ENCODE measurements at regions of chr7 and their contacts with region 1.

Region 1: DNA sequence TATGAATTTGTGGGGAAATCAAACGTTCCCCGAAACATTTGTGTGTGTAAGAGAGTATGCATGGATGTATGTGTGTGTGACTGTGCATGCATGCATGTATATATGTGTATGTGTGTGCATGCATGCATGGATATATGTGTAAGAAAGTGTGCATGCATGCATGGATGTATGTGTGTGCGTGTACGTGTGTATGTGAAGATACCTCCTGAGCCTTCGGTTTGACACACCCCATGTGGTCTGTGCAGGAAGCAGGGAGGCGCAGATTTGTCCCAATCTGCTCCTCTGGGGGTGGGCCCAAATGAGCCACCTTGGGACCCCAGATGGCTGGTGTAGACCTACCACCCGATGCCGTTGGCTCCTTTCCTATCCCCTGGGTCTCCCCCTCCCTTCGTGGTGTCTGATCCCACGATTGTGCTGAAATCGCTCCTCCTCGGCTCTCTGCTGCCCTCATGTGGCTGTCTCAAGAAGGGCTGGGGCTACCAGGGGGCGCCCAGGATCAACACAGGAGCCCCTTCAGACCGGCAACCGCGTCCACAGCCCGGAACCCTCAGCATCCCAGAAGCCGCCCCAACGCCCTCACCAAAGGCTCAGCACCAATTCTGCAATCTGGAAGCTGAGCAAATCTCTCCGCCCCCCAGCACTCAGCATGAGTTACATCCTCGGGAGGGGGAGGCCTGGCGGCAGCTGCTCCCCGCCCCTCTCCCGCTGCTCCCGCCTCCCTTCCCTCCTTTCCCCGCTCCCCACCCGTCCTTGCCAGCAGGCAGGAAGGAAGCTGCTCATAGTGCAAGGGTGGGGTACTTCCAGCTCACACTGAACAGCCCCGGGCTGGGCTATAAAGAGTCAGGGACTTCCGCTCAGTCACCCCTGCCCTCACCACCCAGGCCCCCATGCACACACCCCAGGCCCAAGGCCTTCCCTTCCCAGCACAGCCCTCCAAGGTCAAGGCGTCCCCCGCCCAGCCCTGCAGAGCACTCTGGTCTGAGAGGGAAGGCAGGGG is 2.3 kb upstream of the NOS3 start:
- DNase-seq: peak; percentile 49 to 72 (median 64)
- ATAC-seq: peak; percentile 79
- H3K4me3 ChIP-seq: peak overlapping the region; percentile 10
- H3K4me3 Mint-ChIP-seq: peak overlapping the region; percentile 37 to 83 (median 72)
- H3K27ac ChIP-seq: no peak overlapping the region
- H3K27ac Mint-ChIP-seq: peak overlapping the region in 6 of 9 donors; percentile 5 to 65 (median 26)
- H3K4me1 ChIP-seq: peaks cover 12 to 21% of the 10 kb centered on the region in 2 donors
- H3K4me1 Mint-ChIP-seq: peaks cover 19 to 43% (median 31%) of the 10 kb centered on the region in 7 donors
- H3K27me3 ChIP-seq: no peaks in the 10 kb centered on the region
- H3K27me3 Mint-ChIP-seq: peaks cover 0 to 34% (median 0%) of the 10 kb centered on the region in 5 donors

Region 2: GRCh38 chr7:150898475-150899011 is 90.0 kb before region 1 on chr7:
- CTCF ChIA-PET with region 1: interaction called, 13 read pairs
- POLR2A ChIA-PET with region 1: no interaction called
- intact Hi-C with region 1: loop called (anchors 1 kb)
- DNase-seq: peak; percentile 44 to 81 (median 70)
- ATAC-seq: peak; percentile 84
- H3K4me3 ChIP-seq: no peak overlapping the region
- H3K4me3 Mint-ChIP-seq: peak overlapping the region in 1 of 10 donors; percentile 19
- H3K27ac ChIP-seq: no peak overlapping the region
- H3K27ac Mint-ChIP-seq: peak overlapping the region in 1 of 9 donors; percentile 34
- H3K4me1 ChIP-seq: no peaks in the 10 kb centered on the region
- H3K4me1 Mint-ChIP-seq: peaks cover 0 to 11% (median 5%) of the 10 kb centered on the region in 7 donors
- H3K27me3 ChIP-seq: no peaks in the 10 kb centered on the region
- H3K27me3 Mint-ChIP-seq: peaks cover 32 to 66% (median 60%) of the 10 kb centered on the region in 5 donors

Region 3: GRCh38 chr7:150927956-150928344 is 60.6 kb before region 1 on chr7:
- CTCF ChIA-PET with region 1: no interaction called
- POLR2A ChIA-PET with region 1: no interaction called
- intact Hi-C with region 1: no loop called
- DNase-seq: no peak
- ATAC-seq: no peak
- H3K4me3 ChIP-seq: no peak overlapping the region
- H3K4me3 Mint-ChIP-seq: no peak overlapping the region
- H3K27ac ChIP-seq: no peak overlapping the region
- H3K27ac Mint-ChIP-seq: no peak overlapping the region
- H3K4me1 ChIP-seq: peaks cover 0 to 5% of the 10 kb centered on the region in 2 donors
- H3K4me1 Mint-ChIP-seq: peaks cover 8 to 30% (median 23%) of the 10 kb centered on the region in 7 donors
- H3K27me3 ChIP-seq: no peaks in the 10 kb centered on the region
- H3K27me3 Mint-ChIP-seq: peaks cover 0 to 49% (median 4%) of the 10 kb centered on the region in 5 donors

Region 4: DNA sequence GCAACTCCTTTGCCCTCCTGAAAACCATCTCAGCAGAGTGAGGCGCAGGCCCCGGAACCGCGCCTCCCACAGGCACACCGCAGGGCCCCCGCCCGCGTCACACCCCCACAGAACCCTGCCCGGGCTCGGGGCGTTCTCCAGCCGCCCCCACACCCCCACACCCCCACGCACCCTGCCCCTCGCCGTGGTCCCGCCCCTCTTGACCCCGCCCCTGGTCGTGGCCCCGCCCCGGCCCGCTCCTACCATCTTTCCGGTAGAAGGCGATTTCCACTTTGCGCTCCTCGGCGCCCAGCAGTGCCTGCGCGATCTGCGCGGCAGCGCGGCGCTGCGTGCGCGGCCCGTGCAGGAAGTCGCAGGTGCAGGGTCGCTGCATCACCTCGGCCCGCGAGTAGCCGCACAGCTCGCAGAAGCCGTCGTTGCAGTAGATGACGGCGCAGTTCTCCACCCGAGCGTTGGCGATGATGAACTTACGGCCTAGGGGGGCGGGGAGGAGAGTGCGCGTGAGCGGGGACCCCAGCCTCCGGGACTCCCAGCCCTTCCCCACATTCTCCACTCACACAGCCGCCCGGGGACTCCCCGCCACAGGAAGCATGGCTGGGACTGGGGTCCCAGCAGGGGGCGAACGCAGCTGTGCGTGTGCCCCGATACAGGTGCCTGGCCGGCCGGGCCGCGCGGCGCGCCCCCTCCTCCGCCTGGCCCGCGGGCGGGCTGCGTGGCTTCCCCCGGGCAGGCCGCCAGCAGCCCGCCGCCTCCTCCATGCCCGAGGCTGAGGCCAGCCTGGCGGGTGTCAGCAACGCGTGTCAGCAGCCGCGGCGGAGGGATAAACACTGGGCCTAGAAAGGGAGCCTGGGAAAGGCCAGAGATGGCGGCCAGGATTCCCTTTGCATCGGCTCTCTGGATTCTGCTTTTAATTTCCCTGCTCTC is 13.8 kb before region 1 on chr7:
- CTCF ChIA-PET with region 1: interaction called, 18 read pairs
- POLR2A ChIA-PET with region 1: interaction called, 19 read pairs
- intact Hi-C with region 1: loop called in 1 of 2 experiments (anchors 1 kb)
- DNase-seq: peak; percentile 63 to 84 (median 80)
- ATAC-seq: peak; percentile 85
- H3K4me3 ChIP-seq: peak overlapping the region; percentile 63
- H3K4me3 Mint-ChIP-seq: peak overlapping the region; percentile 85 to 92 (median 88)
- H3K27ac ChIP-seq: peak overlapping the region; percentile 73
- H3K27ac Mint-ChIP-seq: peak overlapping the region; percentile 59 to 97 (median 95)
- H3K4me1 ChIP-seq: peaks cover 20 to 47% of the 10 kb centered on the region in 2 donors
- H3K4me1 Mint-ChIP-seq: peaks cover 33 to 62% (median 55%) of the 10 kb centered on the region in 7 donors
- H3K27me3 ChIP-seq: peaks cover 7 to 13% of the 10 kb centered on the region in 2 donors
- H3K27me3 Mint-ChIP-seq: peaks cover 9 to 36% (median 25%) of the 10 kb centered on the region in 5 donors

Region 5: GRCh38 chr7:151051108-151051507 is 62.6 kb after region 1 on chr7:
- CTCF ChIA-PET with region 1: no interaction called
- POLR2A ChIA-PET with region 1: no interaction called
- intact Hi-C with region 1: loop called (anchors 1 to 5 kb)
- DNase-seq: peak; percentile 55 to 75 (median 69)
- ATAC-seq: peak; percentile 88
- H3K4me3 ChIP-seq: no peak overlapping the region
- H3K4me3 Mint-ChIP-seq: no peak overlapping the region
- H3K27ac ChIP-seq: no peak overlapping the region
- H3K27ac Mint-ChIP-seq: no peak overlapping the region
- H3K4me1 ChIP-seq: peaks cover 0 to 6% of the 10 kb centered on the region in 2 donors
- H3K4me1 Mint-ChIP-seq: peaks cover 6 to 19% (median 14%) of the 10 kb centered on the region in 7 donors
- H3K27me3 ChIP-seq: no peaks in the 10 kb centered on the region
- H3K27me3 Mint-ChIP-seq: peaks cover 0 to 10% (median 0%) of the 10 kb centered on the region in 5 donors

Region 6: GRCh38 chr7:151110941-151111645 is 122.6 kb after region 1 on chr7:
- CTCF ChIA-PET with region 1: interaction called, 5 read pairs
- POLR2A ChIA-PET with region 1: no interaction called
- intact Hi-C with region 1: loop called (anchors 1 kb)
- DNase-seq: peak; percentile 41 to 79 (median 71)
- ATAC-seq: peak; percentile 82
- H3K4me3 ChIP-seq: no peak overlapping the region
- H3K4me3 Mint-ChIP-seq: peak overlapping the region in 1 of 10 donors; percentile 29
- H3K27ac ChIP-seq: no peak overlapping the region
- H3K27ac Mint-ChIP-seq: no peak overlapping the region
- H3K4me1 ChIP-seq: no peaks in the 10 kb centered on the region
- H3K4me1 Mint-ChIP-seq: peaks cover 0 to 9% (median 4%) of the 10 kb centered on the region in 7 donors
- H3K27me3 ChIP-seq: peaks cover 0 to 4% of the 10 kb centered on the region in 2 donors
- H3K27me3 Mint-ChIP-seq: peaks cover 0 to 20% (median 0%) of the 10 kb centered on the region in 5 donors

Measured in naive thymus-derived CD4-positive, alpha-beta T cell (primary cell).